ENCODE measurements at regions of chr5 and their contacts with region 1.

Region 1: GRCh38 chr5:142115937-142116614 is 7.5 kb downstream of the NDFIP1 start:
- DNase-seq: no peak
- ATAC-seq: no peak
- H3K4me3 ChIP-seq: no peak overlapping the region
- H3K4me3 Mint-ChIP-seq: peak overlapping the region; percentile 31
- H3K27ac ChIP-seq: no peak overlapping the region
- H3K27ac Mint-ChIP-seq: no peak overlapping the region
- H3K4me1 ChIP-seq: peaks cover 54% of the 10 kb centered on the region
- H3K4me1 Mint-ChIP-seq: peaks cover 83% of the 10 kb centered on the region
- H3K27me3 ChIP-seq: no peaks in the 10 kb centered on the region
- H3K27me3 Mint-ChIP-seq: no peaks in the 10 kb centered on the region
- CTCF ChIP-seq: no peak

Region 2: GRCh38 chr5:141369994-141370848 is 745.9 kb before region 1 on chr5 and contains the start of gene PCDHGB3:
- CTCF ChIA-PET with region 1: no interaction called
- POLR2A ChIA-PET with region 1: no interaction called
- intact Hi-C with region 1: no loop called
- DNase-seq: peak in 9 of 14 experiments; percentile 4 to 61 (median 28)
- ATAC-seq: peak; percentile 83
- H3K4me3 ChIP-seq: peak within 1 kb of the TSS; percentile 36
- H3K4me3 Mint-ChIP-seq: peak within 1 kb of the TSS; percentile 80
- H3K27ac ChIP-seq: no peak within 1 kb of the TSS
- H3K27ac Mint-ChIP-seq: no peak within 1 kb of the TSS
- H3K4me1 ChIP-seq: peaks cover 8% of the 10 kb centered on the region
- H3K4me1 Mint-ChIP-seq: peaks cover 11% of the 10 kb centered on the region
- H3K27me3 ChIP-seq: peaks cover 71 to 76% of the 10 kb centered on the region in 2 experiments
- H3K27me3 Mint-ChIP-seq: peaks cover 91% of the 10 kb centered on the region
- CTCF ChIP-seq: no peak
- total RNA-seq, gene PCDHGB3: 0.11 to 0.28 TPM

Region 3: DNA sequence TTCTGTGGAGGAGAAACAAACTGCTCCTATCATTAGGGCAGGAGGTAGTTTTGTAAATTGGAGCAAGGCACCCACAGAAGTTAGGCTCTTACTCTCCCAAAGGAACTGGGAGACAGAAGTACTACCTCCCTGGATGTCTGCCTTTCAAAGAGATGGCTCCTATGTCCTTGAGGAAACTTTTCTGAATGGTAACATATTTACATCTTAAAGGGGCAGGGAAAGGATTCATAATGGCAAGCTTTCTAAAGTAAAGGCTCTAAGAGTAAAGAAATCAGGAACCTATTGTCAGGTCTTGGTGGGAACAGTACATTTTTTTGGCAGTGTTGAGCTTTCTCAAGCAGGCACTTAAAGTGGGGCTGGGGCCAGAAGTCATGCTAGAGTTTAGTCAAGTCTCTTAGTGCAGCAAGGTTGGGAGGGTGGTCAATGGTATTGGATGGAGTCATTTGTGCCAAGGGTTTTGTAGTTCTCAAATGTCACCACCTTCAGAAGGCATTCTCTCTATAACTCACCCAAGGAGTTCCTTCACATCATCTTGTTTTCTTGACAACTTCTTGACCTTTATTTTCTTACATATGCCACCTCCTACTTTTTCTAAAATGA is 33.8 kb before region 1 on chr5:
- CTCF ChIA-PET with region 1: no interaction called
- POLR2A ChIA-PET with region 1: no interaction called
- intact Hi-C with region 1: loop called in 1 of 2 experiments (anchors 5 kb)
- DNase-seq: no peak
- ATAC-seq: no peak
- H3K4me3 ChIP-seq: no peak overlapping the region
- H3K4me3 Mint-ChIP-seq: no peak overlapping the region
- H3K27ac ChIP-seq: no peak overlapping the region
- H3K27ac Mint-ChIP-seq: no peak overlapping the region
- H3K4me1 ChIP-seq: no peaks in the 10 kb centered on the region
- H3K4me1 Mint-ChIP-seq: peaks cover 20% of the 10 kb centered on the region
- H3K27me3 ChIP-seq: no peaks in the 10 kb centered on the region
- H3K27me3 Mint-ChIP-seq: no peaks in the 10 kb centered on the region
- CTCF ChIP-seq: no peak

Region 4: DNA sequence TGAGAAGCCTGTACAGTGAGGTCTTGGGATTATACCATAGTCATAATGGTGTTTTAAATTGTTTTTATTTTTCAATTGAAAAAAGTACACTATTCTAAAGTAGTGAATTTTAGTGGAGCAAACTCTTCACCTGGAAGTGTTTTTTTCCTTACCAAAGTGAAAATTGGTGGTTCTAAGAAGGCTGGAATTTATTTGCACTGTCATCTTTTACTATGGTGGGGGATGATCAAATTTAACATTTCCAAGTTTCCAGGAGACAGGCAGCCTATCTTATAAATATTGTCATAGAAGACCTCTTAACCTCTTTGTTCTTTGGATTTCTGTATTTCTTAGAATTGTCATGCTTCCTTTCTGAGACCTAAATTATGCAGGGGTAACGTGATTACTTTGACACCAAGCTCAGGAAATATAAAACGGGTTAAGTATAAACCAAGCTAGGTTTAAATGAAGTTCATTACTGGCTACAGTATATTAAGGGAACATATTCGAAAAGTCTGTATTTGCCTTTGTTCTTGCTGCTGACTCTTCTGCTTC is 12.7 kb after region 1 on chr5:
- CTCF ChIA-PET with region 1: interaction called, 3 read pairs
- POLR2A ChIA-PET with region 1: interaction called, 3 read pairs
- intact Hi-C with region 1: loop called in 1 of 2 experiments (anchors 2 kb)
- DNase-seq: peak in 1 of 14 experiments; percentile 48
- ATAC-seq: peak; percentile 61
- H3K4me3 ChIP-seq: no peak overlapping the region
- H3K4me3 Mint-ChIP-seq: peak overlapping the region; percentile 49
- H3K27ac ChIP-seq: no peak overlapping the region
- H3K27ac Mint-ChIP-seq: peak overlapping the region; percentile 55
- H3K4me1 ChIP-seq: peaks cover 38% of the 10 kb centered on the region
- H3K4me1 Mint-ChIP-seq: peaks cover 68% of the 10 kb centered on the region
- H3K27me3 ChIP-seq: no peaks in the 10 kb centered on the region
- H3K27me3 Mint-ChIP-seq: no peaks in the 10 kb centered on the region
- CTCF ChIP-seq: no peak